Activated naive CD4-positive, alpha-beta T cell treated with anti-CD3 and anti-CD28 coated beads, Interleukin-2, amount 10 ng/mL, durations not matched to agents 7 days and 5 days (primary cell): ENCODE measurements at regions of chr19 and their contacts with region 1.

Region 1: GRCh38 chr19:38335949-38336637 is 463 bp downstream of the CATSPERG start:
- DNase-seq: peak; percentile 98
- H3K4me3 Mint-ChIP-seq: peak overlapping the region; percentile 87
- H3K27ac Mint-ChIP-seq: peak overlapping the region; percentile 99
- H3K4me1 Mint-ChIP-seq: peaks cover 11% of the 10 kb centered on the region
- H3K27me3 Mint-ChIP-seq: no peaks in the 10 kb centered on the region

Region 2: DNA sequence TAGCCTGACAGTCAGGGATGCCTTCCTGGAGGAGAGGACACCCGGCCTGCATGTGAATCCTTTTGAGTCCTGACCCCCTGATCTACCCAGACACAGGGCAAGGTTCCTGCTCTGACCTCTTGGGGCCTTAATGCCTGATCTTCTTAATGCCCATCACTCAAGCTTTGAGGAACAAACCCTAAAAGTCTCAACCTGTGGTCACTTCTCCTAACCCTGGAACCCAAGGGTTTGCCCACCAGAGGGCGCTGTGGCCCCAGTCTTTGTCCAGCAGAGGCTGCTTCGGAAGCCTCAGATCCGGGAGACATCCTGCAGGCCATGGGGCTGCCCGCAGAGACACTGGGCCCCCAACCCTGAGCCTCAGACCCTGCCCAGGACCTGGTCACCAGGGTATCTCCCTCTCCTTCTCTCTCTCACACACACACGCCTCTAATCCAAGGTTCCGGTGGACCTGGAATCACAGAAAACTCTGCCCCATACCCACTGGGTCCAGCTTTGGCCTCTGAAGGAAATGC is 102.3 kb before region 1 on chr19:
- CTCF ChIA-PET with region 1: interaction called, 15 read pairs
- DNase-seq: peak; percentile 87
- H3K4me3 Mint-ChIP-seq: no peak overlapping the region
- H3K27ac Mint-ChIP-seq: no peak overlapping the region
- H3K4me1 Mint-ChIP-seq: peaks cover 6% of the 10 kb centered on the region
- H3K27me3 Mint-ChIP-seq: peaks cover 64% of the 10 kb centered on the region

Region 3: DNA sequence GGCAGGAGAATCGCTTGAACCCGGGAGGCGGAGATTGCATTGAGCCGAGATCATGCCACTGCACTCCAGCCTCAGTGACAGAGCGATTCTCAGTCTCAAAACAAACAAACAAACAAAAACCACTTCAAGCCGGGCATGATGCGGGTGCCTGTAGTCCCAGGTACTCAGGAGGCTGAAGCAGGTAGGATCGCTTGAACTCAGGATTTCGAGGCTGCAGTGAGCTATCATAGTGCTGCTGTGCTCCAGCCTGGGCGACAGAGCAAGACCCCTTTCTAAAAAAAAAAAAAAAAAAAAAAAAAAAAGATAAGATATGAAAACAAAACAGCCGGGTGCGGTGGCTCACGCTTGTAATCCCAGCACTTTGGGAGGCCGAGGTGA is 92.8 kb before region 1 on chr19:
- CTCF ChIA-PET with region 1: interaction called, 13 read pairs
- DNase-seq: no peak
- H3K4me3 Mint-ChIP-seq: no peak overlapping the region
- H3K27ac Mint-ChIP-seq: no peak overlapping the region
- H3K4me1 Mint-ChIP-seq: peaks cover 2% of the 10 kb centered on the region
- H3K27me3 Mint-ChIP-seq: peaks cover 16% of the 10 kb centered on the region

Region 4: GRCh38 chr19:38346837-38347236 is 10.7 kb after region 1 on chr19:
- CTCF ChIA-PET with region 1: no interaction called
- DNase-seq: no peak
- H3K4me3 Mint-ChIP-seq: no peak overlapping the region
- H3K27ac Mint-ChIP-seq: no peak overlapping the region
- H3K4me1 Mint-ChIP-seq: no peaks in the 10 kb centered on the region
- H3K27me3 Mint-ChIP-seq: peaks cover 11% of the 10 kb centered on the region

Region 5: DNA sequence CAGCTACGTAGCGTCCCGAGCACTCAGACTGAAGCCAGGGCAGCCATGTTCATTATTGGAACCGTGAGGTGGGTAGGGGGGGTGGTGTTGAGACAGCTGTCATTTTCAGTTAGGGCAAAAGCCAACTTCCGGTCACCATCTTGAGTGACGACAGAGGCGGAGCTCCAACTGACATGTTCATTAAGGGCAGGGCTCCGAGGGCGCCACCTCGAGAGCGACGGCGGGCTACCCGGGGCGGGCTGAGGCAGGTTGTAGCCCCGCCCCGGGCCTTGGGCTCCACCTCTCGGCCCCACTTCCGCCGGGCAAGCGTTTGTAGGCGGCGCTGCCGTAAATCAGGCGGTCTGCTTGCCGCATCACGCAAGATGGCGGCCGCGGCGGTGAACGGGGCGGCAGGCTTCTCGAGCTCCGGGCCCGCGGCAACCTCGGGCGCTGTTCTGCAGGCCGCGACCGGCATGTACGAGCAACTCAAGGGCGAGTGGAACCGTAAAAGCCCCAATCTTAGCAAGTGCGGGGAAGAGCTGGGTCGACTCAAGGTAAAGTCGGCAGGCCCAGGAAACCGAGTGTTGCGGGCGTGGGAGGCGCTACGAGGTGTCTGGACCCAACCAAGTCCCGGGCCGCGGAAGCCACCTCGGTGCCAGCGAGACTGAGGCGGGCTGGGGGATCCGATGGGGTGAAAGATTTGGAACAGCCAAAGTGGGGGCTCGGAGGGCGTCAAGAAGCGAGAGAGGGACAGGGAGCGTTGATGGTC is 38.5 kb after region 1 on chr19 and contains the start of gene PSMD8:
- CTCF ChIA-PET with region 1: interaction called, 16 read pairs
- DNase-seq: peak; percentile 99
- H3K4me3 Mint-ChIP-seq: peak within 1 kb of the TSS; percentile 99
- H3K27ac Mint-ChIP-seq: peak within 1 kb of the TSS; percentile 96
- H3K4me1 Mint-ChIP-seq: peaks cover 27% of the 10 kb centered on the region
- H3K27me3 Mint-ChIP-seq: peaks cover 23% of the 10 kb centered on the region